Activated CD8-positive, alpha-beta memory T cell treated with anti-CD3 and anti-CD28 coated beads, Interleukin-2, amount 10 ng/mL, durations not matched to agents 7 days and 5 days (primary cell): ENCODE measurements at regions of chr4 and their contacts with region 1.

Region 1: DNA sequence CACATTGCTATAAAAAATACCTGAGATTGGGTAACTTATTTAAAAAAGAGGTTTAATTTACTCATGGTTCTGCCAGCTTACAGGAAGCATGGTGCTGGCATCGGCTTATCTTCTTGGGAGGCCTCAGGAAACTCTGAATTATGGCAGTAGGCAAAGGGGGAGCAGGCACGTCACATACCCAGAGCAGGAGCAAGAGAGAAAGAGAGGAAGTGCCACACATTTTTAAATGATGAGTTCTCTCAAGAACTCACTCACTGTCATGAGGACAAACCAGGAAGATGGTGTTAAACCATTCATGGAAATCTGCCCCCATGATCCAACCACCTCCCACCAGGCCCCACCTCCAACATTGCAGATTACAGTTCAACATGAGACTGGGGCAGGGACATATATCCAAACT is 10.0 kb upstream of the AFF1 start:
- DNase-seq: no peak
- ATAC-seq: no peak
- H3K4me3 Mint-ChIP-seq: no peak overlapping the region
- H3K27ac Mint-ChIP-seq: no peak overlapping the region
- H3K4me1 Mint-ChIP-seq: peaks cover 8% of the 10 kb centered on the region
- H3K27me3 Mint-ChIP-seq: no peaks in the 10 kb centered on the region

Region 2: DNA sequence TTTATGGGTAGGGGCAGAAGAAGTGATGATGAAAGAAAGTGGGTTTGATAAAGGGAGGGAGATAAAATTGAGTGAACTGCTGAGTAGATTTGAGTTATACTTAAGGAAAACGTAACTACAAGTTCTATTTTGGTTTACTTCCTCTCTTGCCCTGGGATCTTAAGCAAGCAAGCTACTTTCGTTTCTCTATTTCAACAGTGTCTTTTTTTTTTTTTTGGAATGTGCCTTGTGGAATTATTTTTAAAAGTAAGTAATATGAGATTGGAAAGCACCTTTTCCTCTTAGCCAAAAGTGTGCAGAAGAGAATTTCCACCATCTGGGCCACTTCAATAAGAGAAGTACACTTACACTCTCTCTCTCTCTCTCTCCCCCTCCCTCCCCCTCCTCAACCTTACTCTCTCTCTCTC is 16.6 kb before region 1 on chr4:
- CTCF ChIA-PET with region 1: interaction called, 14 read pairs
- DNase-seq: no peak
- ATAC-seq: no peak
- H3K4me3 Mint-ChIP-seq: no peak overlapping the region
- H3K27ac Mint-ChIP-seq: peak overlapping the region; percentile 29
- H3K4me1 Mint-ChIP-seq: peaks cover 19% of the 10 kb centered on the region
- H3K27me3 Mint-ChIP-seq: peaks cover 4% of the 10 kb centered on the region

Region 3: GRCh38 chr4:86934771-86935565 is 10.2 kb after region 1 on chr4 and contains the start of gene AFF1:
- CTCF ChIA-PET with region 1: interaction called, 40 read pairs
- DNase-seq: peak; percentile 94
- ATAC-seq: peak; percentile 81
- H3K4me3 Mint-ChIP-seq: peak within 1 kb of the TSS; percentile 80
- H3K27ac Mint-ChIP-seq: peak within 1 kb of the TSS; percentile 94
- H3K4me1 Mint-ChIP-seq: peaks cover 43% of the 10 kb centered on the region
- H3K27me3 Mint-ChIP-seq: no peaks in the 10 kb centered on the region
- total RNA-seq, gene AFF1: 42.3 to 67.5 TPM

Region 4: GRCh38 chr4:87006676-87007527 is 82.1 kb after region 1 on chr4:
- CTCF ChIA-PET with region 1: interaction called, 10 read pairs
- DNase-seq: peak; percentile 94
- ATAC-seq: peak; percentile 86
- H3K4me3 Mint-ChIP-seq: peak overlapping the region; percentile 95
- H3K27ac Mint-ChIP-seq: peak overlapping the region; percentile 98
- H3K4me1 Mint-ChIP-seq: peaks cover 55% of the 10 kb centered on the region
- H3K27me3 Mint-ChIP-seq: no peaks in the 10 kb centered on the region

Region 5: GRCh38 chr4:87093443-87094123 is 168.8 kb after region 1 on chr4:
- CTCF ChIA-PET with region 1: interaction called, 123 read pairs
- DNase-seq: peak; percentile 49
- ATAC-seq: peak; percentile 76
- H3K4me3 Mint-ChIP-seq: no peak overlapping the region
- H3K27ac Mint-ChIP-seq: no peak overlapping the region
- H3K4me1 Mint-ChIP-seq: peaks cover 7% of the 10 kb centered on the region
- H3K27me3 Mint-ChIP-seq: no peaks in the 10 kb centered on the region

Region 6: GRCh38 chr4:87150498-87151261 is 225.9 kb after region 1 on chr4:
- CTCF ChIA-PET with region 1: interaction called, 16 read pairs
- DNase-seq: peak; percentile 53
- ATAC-seq: peak; percentile 61
- H3K4me3 Mint-ChIP-seq: no peak overlapping the region
- H3K27ac Mint-ChIP-seq: no peak overlapping the region
- H3K4me1 Mint-ChIP-seq: no peaks in the 10 kb centered on the region
- H3K27me3 Mint-ChIP-seq: no peaks in the 10 kb centered on the region

Region 7: GRCh38 chr4:87235020-87235671 is 310.3 kb after region 1 on chr4:
- CTCF ChIA-PET with region 1: interaction called, 14 read pairs
- DNase-seq: no peak
- ATAC-seq: no peak
- H3K4me3 Mint-ChIP-seq: peak overlapping the region; percentile 69
- H3K27ac Mint-ChIP-seq: no peak overlapping the region
- H3K4me1 Mint-ChIP-seq: peaks cover 2% of the 10 kb centered on the region
- H3K27me3 Mint-ChIP-seq: peaks cover 20% of the 10 kb centered on the region